ENCODE measurements at regions of chr3 and their contacts with region 1.

Region 1: GRCh38 chr3:130759699-130760338 is 13.2 kb upstream of the PIK3R4 start:
- DNase-seq: no peak
- H3K4me3 ChIP-seq: no peak overlapping the region
- CTCF ChIP-seq: peak; percentile 62

Region 2: DNA sequence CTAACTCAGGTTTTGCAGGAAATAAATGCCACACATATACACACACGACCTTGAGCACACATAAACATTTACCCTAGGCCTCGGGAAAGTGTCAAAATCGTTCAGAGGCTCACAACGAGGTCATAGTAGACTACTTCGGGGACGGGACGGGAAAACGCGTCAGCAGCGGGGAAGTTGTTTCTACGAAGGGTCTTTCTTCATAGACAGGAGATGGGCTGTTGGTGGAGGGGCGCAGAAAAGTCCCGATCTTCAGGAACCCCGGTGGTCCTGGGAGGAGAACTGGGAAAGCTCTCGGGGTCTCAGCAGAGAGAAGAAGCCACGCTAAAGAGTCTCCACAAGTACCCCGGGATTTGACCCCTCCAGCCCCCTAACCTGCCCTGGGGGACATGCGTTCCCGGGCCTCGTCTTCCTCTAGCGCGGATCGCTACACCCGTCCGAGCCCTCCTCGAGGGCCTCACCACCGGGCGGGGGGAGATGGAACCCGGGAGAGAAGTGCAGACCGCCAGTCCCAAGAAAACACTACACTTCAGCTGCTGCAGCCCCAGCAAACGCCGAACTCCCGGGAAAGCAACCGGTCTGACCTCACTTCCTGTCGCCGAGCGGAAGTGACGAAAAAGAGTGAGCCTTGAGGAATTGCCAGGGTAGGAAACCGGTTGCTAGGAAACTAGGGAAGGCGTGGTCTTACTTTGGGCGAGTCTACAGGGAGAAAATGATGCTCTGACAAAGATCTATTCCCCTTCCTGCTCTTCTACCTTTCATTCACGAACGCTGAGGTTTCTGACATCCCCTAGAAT is 13.4 kb before region 1 on chr3 and contains the start of gene PIK3R4:
- CTCF ChIA-PET with region 1: interaction called, 36 read pairs
- POLR2A ChIA-PET with region 1: no interaction called
- DNase-seq: peak; percentile 87
- H3K4me3 ChIP-seq: peak within 1 kb of the TSS; percentile 95
- CTCF ChIP-seq: no peak

Region 3: GRCh38 chr3:130773366-130773765 is 13.5 kb after region 1 on chr3:
- CTCF ChIA-PET with region 1: interaction called, 10 read pairs
- POLR2A ChIA-PET with region 1: no interaction called
- DNase-seq: no peak
- H3K4me3 ChIP-seq: no peak overlapping the region
- CTCF ChIP-seq: no peak

Region 4: GRCh38 chr3:130892759-130893375 is 133.0 kb after region 1 on chr3:
- CTCF ChIA-PET with region 1: interaction called, 33 read pairs
- POLR2A ChIA-PET with region 1: no interaction called
- DNase-seq: no peak
- H3K4me3 ChIP-seq: peak overlapping the region; percentile 72
- CTCF ChIP-seq: peak; percentile 65